HepG2 (cell line): ENCODE measurements at regions of chr1 and their contacts with region 1.

Region 1: GRCh38 chr1:211885747-211886522 is 55.4 kb upstream of the LPGAT1 start:
- DNase-seq: peak; percentile 87
- ATAC-seq: peak; percentile 97
- H3K4me3 ChIP-seq: 0 out of 6 replicates have a peak overlapping the region, but pooled peaks of 1 of the 3 experiments have one; percentile 3
- H3K27ac ChIP-seq: peak overlapping the region; percentile 63
- H3K4me1 ChIP-seq: peaks cover 55% of the 10 kb centered on the region
- H3K27me3 ChIP-seq: no peaks in the 10 kb centered on the region
- CTCF ChIP-seq: peak; percentile 41
- EP300 ChIP-seq: peak; percentile 20 to 83; a peak in 2 of 4 replicates
- POLR2A ChIP-seq: no peak
- RAD21 ChIP-seq: 0 out of 2 replicates have a peak, but pooled peaks have one; percentile 22

Region 2: GRCh38 chr1:211928993-211929637 is 43.2 kb after region 1 on chr1:
- CTCF ChIA-PET with region 1: no interaction called
- POLR2A ChIA-PET with region 1: no interaction called
- in situ Hi-C with region 1: no loop called
- intact Hi-C with region 1: loop called (anchors 5 kb)
- DNase-seq: peak; percentile 84
- ATAC-seq: peak; percentile 91
- H3K4me3 ChIP-seq: peak overlapping the region; percentile 36 to 61 (median 41)
- H3K27ac ChIP-seq: peak overlapping the region; percentile 72
- H3K4me1 ChIP-seq: peaks cover 34% of the 10 kb centered on the region
- H3K27me3 ChIP-seq: no peaks in the 10 kb centered on the region
- CTCF ChIP-seq: no peak
- EP300 ChIP-seq: peak in 1 of 2 experiments; percentile 60; a peak in 1 of 4 replicates
- POLR2A ChIP-seq: 0 out of 4 replicates have a peak, but pooled peaks of 1 of the 2 experiments have one; percentile 29
- RAD21 ChIP-seq: no peak